Posterior cingulate gyrus (tissue), 11 donors: ENCODE measurements at regions of chr13 and their contacts with region 1.

Region 1: DNA sequence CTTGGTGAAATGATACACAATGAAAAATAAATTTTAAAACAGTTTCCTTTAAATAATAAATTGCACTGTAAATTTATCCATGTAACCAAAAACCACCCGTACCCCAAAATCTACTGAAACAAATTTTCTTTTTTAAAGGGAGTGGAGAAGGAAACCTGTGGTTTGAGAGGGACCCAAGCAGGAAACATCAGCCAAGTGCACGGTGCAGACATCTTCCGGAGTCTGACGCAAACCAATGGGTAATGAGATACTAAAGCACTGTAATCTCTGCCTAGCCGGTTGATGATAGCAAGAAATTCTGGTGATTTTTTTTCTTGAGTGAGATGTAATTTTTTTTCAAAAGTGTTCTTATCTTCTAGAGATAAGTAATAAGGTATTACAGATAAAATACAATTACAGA is 115.4 kb downstream of the ABCC4 start:
- DNase-seq: no peak

Region 2: DNA sequence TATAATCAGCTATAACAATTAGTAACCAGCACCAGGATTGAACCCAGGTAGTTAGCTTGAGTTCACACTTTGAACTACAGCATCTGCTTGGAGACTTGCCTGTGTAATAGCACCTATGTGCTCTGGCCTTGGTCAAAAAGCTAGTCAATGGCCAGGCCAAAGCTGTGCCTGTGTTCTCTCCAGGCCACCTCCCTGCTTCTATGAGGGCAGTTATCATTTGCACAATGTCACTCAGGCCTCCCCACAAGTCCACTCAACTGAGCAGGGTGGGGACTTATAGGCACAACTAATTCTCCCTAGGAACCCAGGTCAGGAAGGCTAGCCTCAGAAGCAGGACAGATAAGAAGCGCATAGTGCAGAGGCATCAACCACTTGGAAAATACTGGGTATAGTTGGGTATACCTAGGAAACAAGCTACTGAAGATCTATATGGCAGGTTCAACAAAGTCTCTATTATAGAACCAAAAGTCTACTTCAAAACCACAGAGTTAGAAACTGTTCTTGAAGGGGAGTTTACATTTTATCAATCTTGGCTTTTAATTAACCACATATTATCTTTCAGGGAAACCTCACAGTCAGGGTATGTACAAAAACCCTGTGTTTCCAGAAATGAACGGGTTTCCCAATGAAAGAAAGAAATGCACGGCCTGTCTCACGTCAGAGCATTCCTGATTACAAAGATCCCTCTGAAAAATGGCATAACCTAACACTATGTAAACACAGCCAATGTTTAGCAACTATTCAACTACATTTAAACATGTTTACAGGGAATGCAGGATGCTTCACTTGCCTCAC is 25.5 kb before region 1 on chr13:
- intact Hi-C with region 1: no loop called
- DNase-seq: no peak

Region 3: GRCh38 chr13:95355494-95355893 is 169.6 kb after region 1 on chr13:
- intact Hi-C with region 1: no loop called
- DNase-seq: no peak

Region 4: GRCh38 chr13:95479731-95480130 is 293.9 kb after region 1 on chr13:
- intact Hi-C with region 1: loop called (anchors 5 kb)
- DNase-seq: no peak

Region 5: DNA sequence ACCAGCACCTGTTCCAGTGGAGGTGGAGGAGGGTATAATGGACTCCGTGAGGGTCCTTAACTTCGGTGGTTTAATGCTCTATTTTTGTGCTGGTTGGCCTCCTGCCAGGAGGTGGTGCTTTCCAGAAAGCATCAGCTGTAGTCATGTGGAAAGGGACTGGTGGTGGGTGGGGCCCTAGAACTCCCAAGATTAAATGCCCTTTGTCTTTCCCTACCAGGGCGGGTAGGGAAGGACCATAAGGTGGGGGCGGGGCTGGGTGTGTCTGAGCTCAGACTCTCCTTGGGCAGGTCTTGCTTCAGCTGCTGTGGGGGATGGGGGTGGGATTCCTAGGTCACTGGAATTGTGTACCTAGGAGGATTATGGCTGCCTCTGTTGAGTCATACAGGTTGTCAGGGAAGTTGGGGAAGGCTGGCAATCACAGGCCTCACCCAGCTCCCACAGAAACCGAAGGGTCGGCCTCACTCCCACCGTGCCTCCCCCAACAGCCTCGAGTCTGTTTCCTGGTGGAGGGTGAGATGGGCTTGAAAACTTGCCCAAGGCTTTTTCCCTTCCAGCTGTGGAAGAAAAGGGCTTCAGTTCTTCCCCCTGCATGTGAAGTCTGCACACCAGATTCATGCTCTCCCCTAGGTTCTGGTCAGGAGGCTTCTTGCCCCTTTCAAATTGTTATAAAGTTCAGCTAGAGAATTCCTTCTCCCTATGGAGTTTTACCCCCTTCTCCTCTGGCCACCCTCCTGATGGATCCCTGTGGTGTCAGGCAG is 306.4 kb after region 1 on chr13:
- intact Hi-C with region 1: no loop called
- DNase-seq: no peak

Region 6: GRCh38 chr13:95530178-95530577 is 344.3 kb after region 1 on chr13:
- intact Hi-C with region 1: no loop called
- DNase-seq: no peak